ENCODE measurements at regions of chr11 and their contacts with region 1.

Region 1: GRCh38 chr11:31877083-31877482 is 66.0 kb upstream of the PAX6 start:
- DNase-seq: no peak
- H3K4me3 ChIP-seq: no peak overlapping the region
- CTCF ChIP-seq: no peak
- POLR2A ChIP-seq: no peak

Region 2: GRCh38 chr11:31834237-31834636 is 42.8 kb before region 1 on chr11:
- intact Hi-C with region 1: no loop called
- DNase-seq: no peak
- H3K4me3 ChIP-seq: no peak overlapping the region
- CTCF ChIP-seq: no peak
- POLR2A ChIP-seq: no peak

Region 3: GRCh38 chr11:31856248-31856647 is 20.8 kb before region 1 on chr11:
- intact Hi-C with region 1: loop called (anchors 1 kb)
- DNase-seq: no peak
- H3K4me3 ChIP-seq: no peak overlapping the region
- CTCF ChIP-seq: no peak
- POLR2A ChIP-seq: no peak

Measured in lower leg skin (tissue), 4 donors.